Spleen (tissue), 13 donors: ENCODE measurements at regions of chr11 and their contacts with region 1.

Region 1: GRCh38 chr11:105000797-105001196 is 22.2 kb downstream of the CASP5 start:
- DNase-seq: peak; percentile 80
- H3K4me3 ChIP-seq: no peak overlapping the region
- H3K27ac ChIP-seq: no peak overlapping the region
- H3K4me1 ChIP-seq: peaks cover 0 to 9% (median 2%) of the 10 kb centered on the region in 6 donors
- H3K27me3 ChIP-seq: no peaks in the 10 kb centered on the region
- CTCF ChIP-seq: peak; percentile 61 to 88 (median 80)
- POLR2A ChIP-seq: no peak

Region 2: GRCh38 chr11:104380358-104380757 is 620.4 kb before region 1 on chr11:
- intact Hi-C with region 1: no loop called
- DNase-seq: no peak
- H3K4me3 ChIP-seq: no peak overlapping the region
- H3K27ac ChIP-seq: no peak overlapping the region
- H3K4me1 ChIP-seq: no peaks in the 10 kb centered on the region
- H3K27me3 ChIP-seq: no peaks in the 10 kb centered on the region
- CTCF ChIP-seq: no peak
- POLR2A ChIP-seq: no peak

Region 3: GRCh38 chr11:104609311-104610085 is 391.3 kb before region 1 on chr11:
- intact Hi-C with region 1: loop called (anchors 10 kb)
- DNase-seq: no peak
- H3K4me3 ChIP-seq: no peak overlapping the region
- H3K27ac ChIP-seq: peak overlapping the region in 6 of 8 donors; percentile 1 to 60 (median 27)
- H3K4me1 ChIP-seq: peaks cover 0 to 16% (median 13%) of the 10 kb centered on the region in 6 donors
- H3K27me3 ChIP-seq: no peaks in the 10 kb centered on the region
- CTCF ChIP-seq: peak; percentile 42 to 81 (median 67)
- POLR2A ChIP-seq: no peak

Region 4: DNA sequence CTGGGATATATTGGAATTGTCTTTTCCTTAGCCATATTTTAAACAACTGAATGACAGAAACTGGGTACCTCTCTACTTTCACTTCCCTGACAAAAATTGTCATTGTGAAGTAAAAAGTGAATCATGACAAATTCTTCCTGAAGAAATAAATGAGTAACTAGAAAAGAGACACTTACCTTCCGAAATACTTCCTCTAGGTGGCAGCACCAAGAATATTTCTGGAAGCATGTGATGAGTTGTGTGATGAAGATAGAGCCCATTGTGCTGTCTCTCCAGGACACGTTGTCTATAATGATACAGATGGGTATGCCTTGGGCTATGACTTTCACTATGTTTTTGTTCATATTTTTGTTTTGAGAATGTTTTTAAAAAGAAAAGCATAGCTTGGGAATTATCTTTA is 53.9 kb before region 1 on chr11:
- intact Hi-C with region 1: no loop called
- DNase-seq: no peak
- H3K4me3 ChIP-seq: no peak overlapping the region
- H3K27ac ChIP-seq: peak overlapping the region in 3 of 8 donors; percentile 1 to 16 (median 14)
- H3K4me1 ChIP-seq: peaks cover 0 to 13% (median 4%) of the 10 kb centered on the region in 6 donors
- H3K27me3 ChIP-seq: no peaks in the 10 kb centered on the region
- CTCF ChIP-seq: peak; percentile 14 to 74 (median 56)
- POLR2A ChIP-seq: no peak